GM12878 (cell line): ENCODE measurements at regions of chr15 and their contacts with region 1.

Region 1: DNA sequence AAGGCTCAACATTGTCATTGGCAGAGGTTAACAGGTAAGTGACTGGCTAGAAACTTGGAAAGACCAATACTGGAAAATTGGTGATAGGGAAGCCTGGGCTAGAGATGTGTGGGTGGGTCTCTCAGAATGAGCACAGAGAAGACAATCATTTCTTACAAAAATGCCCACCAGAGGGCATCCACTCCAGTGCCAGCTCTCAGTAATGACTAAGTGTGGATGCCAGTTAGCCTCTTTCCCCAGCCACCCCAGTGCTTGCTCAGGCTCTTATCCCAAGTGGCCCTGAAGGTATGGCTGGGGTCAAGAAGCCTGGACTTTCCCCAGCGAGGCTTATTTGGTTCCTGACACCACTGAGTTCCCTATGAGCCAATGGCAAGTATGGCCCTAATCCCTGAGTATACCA is 115.9 kb upstream of the ST8SIA2 start:
- DNase-seq: no peak
- ATAC-seq: peak; percentile 78
- H3K4me3 ChIP-seq: no peak overlapping the region
- H3K27ac ChIP-seq: no peak overlapping the region
- H3K4me1 ChIP-seq: no peaks in the 10 kb centered on the region
- H3K27me3 ChIP-seq: peaks cover 0 to 2% of the 10 kb centered on the region in 2 experiments; a peak in 3 of 4 replicates
- CTCF ChIP-seq: peak; percentile 33 to 39 (median 34); a peak in 3 of 6 replicates
- EP300 ChIP-seq: no peak
- POLR2A ChIP-seq: no peak
- RAD21 ChIP-seq: no peak

Region 2: GRCh38 chr15:92217896-92218295 is 59.9 kb before region 1 on chr15:
- CTCF ChIA-PET with region 1: no interaction called
- POLR2A ChIA-PET with region 1: no interaction called
- RAD21 ChIA-PET with region 1: no interaction called
- SMC1A ChIA-PET with region 1: no interaction called
- in situ Hi-C with region 1: loop called (anchors 10 kb)
- intact Hi-C with region 1: no loop called
- DNase-seq: no peak
- ATAC-seq: no peak
- H3K4me3 ChIP-seq: no peak overlapping the region
- H3K27ac ChIP-seq: no peak overlapping the region
- H3K4me1 ChIP-seq: no peaks in the 10 kb centered on the region
- H3K27me3 ChIP-seq: no peaks in the 10 kb centered on the region
- CTCF ChIP-seq: no peak
- EP300 ChIP-seq: no peak
- POLR2A ChIP-seq: no peak
- RAD21 ChIP-seq: no peak